GM18951 (cell line): ENCODE measurements at regions of chr12 and their contacts with region 1.

Region 1: GRCh38 chr12:4857472-4858291 is 52.0 kb upstream of the KCNA1 start:
- POLR2A ChIP-seq: no peak

Region 2: DNA sequence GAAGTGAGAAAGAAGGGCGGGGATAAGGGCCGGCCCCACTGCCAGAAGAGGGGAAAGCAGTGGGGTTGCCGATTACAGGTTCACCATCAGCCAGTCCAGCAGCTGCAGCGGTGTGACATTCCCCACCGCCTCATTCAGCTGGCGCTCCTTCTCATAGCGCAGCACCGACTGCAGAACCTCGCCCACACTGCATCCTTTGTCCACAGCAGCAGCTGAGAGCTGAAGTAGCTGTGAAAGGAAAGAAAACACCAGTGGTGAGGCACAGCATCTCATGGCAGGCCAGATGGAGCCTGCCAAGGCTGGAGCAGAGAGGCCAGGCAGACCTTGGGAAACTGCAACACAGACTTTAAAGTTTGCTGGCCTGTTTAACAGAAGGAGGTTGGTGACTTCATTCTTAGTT is 242.0 kb before region 1 on chr12:
- in situ Hi-C with region 1: no loop called
- POLR2A ChIP-seq: no peak

Region 3: GRCh38 chr12:4934407-4935035 is 76.8 kb after region 1 on chr12:
- in situ Hi-C with region 1: no loop called
- POLR2A ChIP-seq: no peak

Region 4: DNA sequence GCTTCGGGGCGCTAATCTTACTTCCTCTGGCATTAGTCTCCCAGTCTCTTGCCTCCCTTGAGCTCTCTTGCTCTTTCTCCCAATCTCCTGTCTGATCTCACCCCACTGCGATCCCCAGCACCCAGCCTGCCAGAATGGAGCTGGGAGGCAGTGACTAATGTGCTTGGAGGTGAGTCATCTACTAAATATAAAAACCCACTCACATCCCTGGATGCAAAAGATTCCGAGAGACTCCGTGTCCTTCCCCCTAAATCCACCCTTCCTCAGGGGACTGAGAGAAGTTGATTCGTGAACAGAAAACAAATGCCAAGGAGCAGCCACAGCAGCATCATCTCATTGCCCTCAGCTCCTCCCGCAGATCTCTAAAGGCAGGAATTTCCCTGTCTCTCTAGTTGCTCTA is 140.3 kb after region 1 on chr12:
- in situ Hi-C with region 1: loop called (anchors 10 kb)
- POLR2A ChIP-seq: no peak

Region 5: GRCh38 chr12:5083955-5084849 is 226.5 kb after region 1 on chr12:
- in situ Hi-C with region 1: loop called (anchors 10 kb)
- POLR2A ChIP-seq: no peak